Activated CD4-positive, alpha-beta memory T cell treated with anti-CD3 and anti-CD28 coated beads for 36 hours (primary cell): ENCODE measurements at regions of chr1 and their contacts with region 1.

Region 1: DNA sequence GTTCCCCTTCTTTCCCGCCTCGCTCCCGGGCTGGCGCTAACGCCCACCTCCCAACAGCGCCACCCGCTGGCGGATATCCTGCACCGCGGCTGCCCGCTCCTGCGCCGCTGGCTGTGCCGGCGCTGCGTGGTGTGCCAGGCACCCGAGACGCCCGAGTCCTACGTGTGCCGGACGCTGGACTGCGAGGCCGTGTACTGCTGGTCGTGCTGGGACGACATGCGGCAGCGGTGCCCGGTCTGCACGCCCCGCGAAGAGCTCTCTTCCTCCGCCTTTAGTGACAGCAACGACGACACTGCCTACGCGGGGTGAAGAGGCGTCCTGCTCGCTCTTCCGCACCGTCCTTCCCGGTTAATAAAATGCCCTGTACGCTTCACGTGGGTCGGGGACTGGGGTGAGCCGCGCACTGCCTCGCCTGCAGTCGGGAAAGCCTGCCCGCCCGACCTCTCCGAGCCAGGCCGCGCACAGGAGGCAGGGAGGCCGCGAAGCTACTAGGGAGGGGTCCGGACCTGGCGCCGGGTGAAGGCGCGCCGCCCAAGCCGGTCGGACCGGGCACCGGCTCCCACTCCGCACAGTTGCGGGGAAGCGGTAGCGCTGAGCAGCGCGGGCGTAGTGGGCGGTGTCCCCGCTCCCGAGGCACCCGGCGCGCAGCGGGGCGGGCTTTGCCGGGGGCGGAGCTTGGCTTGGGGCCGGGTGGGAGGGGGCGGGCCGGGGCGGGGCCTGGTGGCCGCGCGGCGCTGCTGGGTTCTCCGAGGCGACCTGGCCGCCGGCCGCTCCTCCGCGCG is at the start of gene ADAM15:
- DNase-seq: peak; percentile 87
- H3K4me3 Mint-ChIP-seq: peak within 1 kb of the TSS; percentile 81
- H3K27ac Mint-ChIP-seq: peak within 1 kb of the TSS; percentile 64
- H3K4me1 Mint-ChIP-seq: peaks cover 22% of the 10 kb centered on the region
- H3K27me3 Mint-ChIP-seq: no peaks in the 10 kb centered on the region
- total RNA-seq, gene ADAM15: 54.3 to 60.5 TPM

Region 2: DNA sequence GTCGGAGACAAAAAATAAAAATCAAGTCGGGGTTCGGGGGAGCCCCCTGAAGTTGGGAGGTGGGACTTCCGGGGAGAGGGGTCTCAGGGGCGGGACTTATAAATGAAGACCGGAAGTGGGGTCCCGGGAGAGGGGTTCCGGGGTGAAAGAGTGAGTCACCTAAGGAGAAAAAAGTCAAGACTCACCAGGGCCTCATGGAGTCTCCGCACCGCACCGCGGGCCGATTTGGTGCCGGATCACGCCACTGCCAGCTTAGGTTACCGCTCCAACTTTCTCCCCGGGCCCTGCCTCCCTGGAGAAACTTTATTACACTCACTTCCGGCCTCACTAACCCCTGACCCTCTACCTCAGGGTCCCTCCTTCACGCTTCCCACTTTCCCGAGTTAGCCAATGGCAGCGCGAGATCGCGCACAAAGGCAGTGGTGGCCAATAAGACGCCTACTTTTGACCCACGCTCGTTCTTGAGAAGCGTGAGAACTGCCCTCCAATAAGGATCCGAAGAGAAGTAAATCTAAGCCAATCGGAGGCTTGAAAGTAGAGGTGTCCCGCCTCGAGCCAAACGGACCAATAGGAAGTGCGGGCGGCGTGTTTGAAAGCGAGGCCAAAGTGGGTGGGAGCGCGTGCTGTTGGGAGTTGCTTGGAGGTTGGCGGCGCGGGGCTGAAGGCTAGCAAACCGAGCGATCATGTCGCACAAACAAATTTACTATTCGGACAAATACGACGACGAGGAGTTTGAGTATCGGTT is 76.5 kb before region 1 on chr1 and contains the start of gene CKS1B:
- CTCF ChIA-PET with region 1: interaction called, 11 read pairs
- POLR2A ChIA-PET with region 1: no interaction called
- intact Hi-C with region 1: loop called (anchors 1 kb)
- DNase-seq: peak; percentile 98
- H3K4me3 Mint-ChIP-seq: no peak within 1 kb of the TSS
- H3K27ac Mint-ChIP-seq: no peak within 1 kb of the TSS
- H3K4me1 Mint-ChIP-seq: peaks cover 30% of the 10 kb centered on the region
- H3K27me3 Mint-ChIP-seq: no peaks in the 10 kb centered on the region
- total RNA-seq, gene CKS1B: 197 to 205 TPM

Region 3: GRCh38 chr1:155038602-155039307 is 12.0 kb before region 1 on chr1:
- CTCF ChIA-PET with region 1: interaction called, 245 read pairs
- POLR2A ChIA-PET with region 1: no interaction called
- intact Hi-C with region 1: no loop called
- DNase-seq: no peak
- H3K4me3 Mint-ChIP-seq: no peak overlapping the region
- H3K27ac Mint-ChIP-seq: no peak overlapping the region
- H3K4me1 Mint-ChIP-seq: no peaks in the 10 kb centered on the region
- H3K27me3 Mint-ChIP-seq: peaks cover 2% of the 10 kb centered on the region

Region 4: DNA sequence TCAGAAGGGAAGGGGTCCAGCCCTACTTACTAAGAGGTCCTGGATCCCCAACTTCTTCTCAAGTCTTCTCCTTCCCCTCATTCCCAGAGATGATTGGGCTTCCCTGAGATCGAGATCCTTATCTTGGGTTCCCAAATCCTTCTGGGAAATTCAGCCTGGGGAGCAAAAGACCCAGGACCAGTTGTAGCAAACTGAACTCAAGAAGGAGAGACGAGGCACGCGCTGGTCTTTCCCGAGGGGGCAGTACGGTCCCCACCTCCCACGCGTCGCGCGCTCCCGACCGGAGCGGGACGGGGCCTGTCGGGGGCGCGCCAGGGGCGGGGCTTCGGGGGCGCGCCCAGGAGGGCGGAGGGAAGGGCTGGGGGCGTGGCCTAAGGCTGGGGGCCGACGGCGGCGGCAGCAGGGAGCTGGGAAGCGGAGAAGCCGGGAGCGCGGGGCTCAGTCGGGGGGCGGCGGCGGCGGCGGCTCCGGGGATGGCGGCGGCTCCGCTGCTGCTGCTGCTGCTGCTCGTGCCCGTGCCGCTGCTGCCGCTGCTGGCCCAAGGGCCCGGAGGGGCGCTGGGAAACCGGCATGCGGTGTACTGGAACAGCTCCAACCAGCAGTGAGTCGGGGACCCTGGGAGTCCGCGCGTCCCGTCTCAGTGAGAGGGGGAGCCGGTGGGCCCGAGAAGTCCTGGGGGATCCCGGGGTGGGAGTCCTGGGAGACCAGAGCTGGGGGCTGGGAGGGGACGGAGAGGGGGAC is 27.9 kb after region 1 on chr1 and contains the start of gene EFNA3:
- CTCF ChIA-PET with region 1: interaction called, 92 read pairs
- POLR2A ChIA-PET with region 1: no interaction called
- intact Hi-C with region 1: no loop called
- DNase-seq: peak; percentile 77
- H3K4me3 Mint-ChIP-seq: peak within 1 kb of the TSS; percentile 56
- H3K27ac Mint-ChIP-seq: no peak within 1 kb of the TSS
- H3K4me1 Mint-ChIP-seq: peaks cover 33% of the 10 kb centered on the region
- H3K27me3 Mint-ChIP-seq: peaks cover 32% of the 10 kb centered on the region
- total RNA-seq, gene EFNA3: 2.4 to 2.6 TPM

Region 5: DNA sequence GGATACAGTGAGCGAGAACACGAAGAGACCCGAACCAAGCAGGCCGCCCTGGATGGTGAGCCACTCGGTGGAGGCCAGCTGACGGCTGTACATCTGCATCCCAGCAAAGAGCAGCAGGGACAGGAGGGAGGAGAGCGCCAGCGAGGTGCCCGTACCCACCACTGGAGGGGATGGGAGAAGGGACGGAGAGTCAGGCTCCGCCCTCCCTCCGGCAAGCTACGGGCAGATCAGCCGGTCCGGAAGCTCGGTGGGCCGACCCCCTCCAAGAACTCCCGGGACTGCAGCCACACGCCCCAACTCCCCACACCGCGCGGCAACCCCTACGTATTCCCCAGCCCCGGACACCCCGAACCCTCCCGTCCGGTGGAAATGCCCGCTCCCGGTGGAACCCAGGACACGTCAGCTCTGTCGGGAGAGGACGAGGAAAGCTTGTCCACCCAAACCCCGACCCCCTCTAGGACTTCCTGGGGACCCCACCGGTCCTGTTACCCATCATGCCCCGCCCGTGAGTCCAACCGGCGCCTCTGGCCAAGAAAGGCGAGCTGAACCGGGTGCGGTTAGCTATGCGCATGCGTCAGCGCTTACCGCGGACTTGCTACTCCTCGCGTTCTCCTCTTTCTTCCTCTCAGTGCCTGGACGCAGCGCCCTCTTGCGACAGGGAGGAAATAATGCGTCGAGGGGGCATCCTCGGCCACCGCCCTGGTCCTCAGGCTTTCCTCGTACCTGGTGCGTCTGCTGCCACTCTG is 122.2 kb after region 1 on chr1 and contains the start of gene KRTCAP2:
- CTCF ChIA-PET with region 1: interaction called, 11 read pairs
- POLR2A ChIA-PET with region 1: no interaction called
- intact Hi-C with region 1: no loop called
- DNase-seq: peak; percentile 98
- H3K4me3 Mint-ChIP-seq: peak within 1 kb of the TSS; percentile 93
- H3K27ac Mint-ChIP-seq: peak within 1 kb of the TSS; percentile 96
- H3K4me1 Mint-ChIP-seq: peaks cover 48% of the 10 kb centered on the region
- H3K27me3 Mint-ChIP-seq: no peaks in the 10 kb centered on the region
- total RNA-seq, gene KRTCAP2: 138 to 146 TPM